Mammary epithelial cell (primary cell): ENCODE measurements at regions of chr19 and their contacts with region 1.

Region 1: DNA sequence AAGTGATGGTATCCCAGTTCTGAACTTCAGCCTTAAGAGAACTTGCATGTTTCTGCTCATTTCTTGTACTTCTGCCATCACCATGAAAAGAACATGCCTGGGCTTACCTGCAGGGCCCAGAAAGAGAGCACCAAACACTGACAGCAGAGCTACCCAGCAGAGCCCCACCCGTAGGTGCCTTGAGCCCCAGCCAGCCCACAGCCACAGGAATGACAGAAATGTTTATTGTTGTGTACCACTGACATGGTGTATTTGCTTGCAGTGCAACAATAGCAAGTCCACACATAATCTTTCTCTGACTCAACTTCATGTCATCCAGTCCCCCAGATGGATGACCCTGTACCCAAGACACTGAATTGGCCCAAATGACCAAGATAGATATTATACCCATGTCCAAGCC is 195.2 kb downstream of the TSHZ3 start:
- DNase-seq: peak; percentile 95
- H3K4me3 ChIP-seq: no peak overlapping the region
- H3K27ac ChIP-seq: peak overlapping the region; percentile 77
- H3K4me1 ChIP-seq: peaks cover 17% of the 10 kb centered on the region
- H3K27me3 ChIP-seq: no peaks in the 10 kb centered on the region
- CTCF ChIP-seq: peak in 1 of 2 donors; percentile 11

Region 2: GRCh38 chr19:31118287-31118955 is 35.6 kb before region 1 on chr19:
- CTCF ChIA-PET with region 1: no interaction called
- dilution Hi-C with region 1: no loop called
- in situ Hi-C with region 1: no loop called
- intact Hi-C with region 1: no loop called
- DNase-seq: no peak
- H3K4me3 ChIP-seq: no peak overlapping the region
- H3K27ac ChIP-seq: no peak overlapping the region
- H3K4me1 ChIP-seq: no peaks in the 10 kb centered on the region
- H3K27me3 ChIP-seq: no peaks in the 10 kb centered on the region
- CTCF ChIP-seq: no peak

Region 3: GRCh38 chr19:31139871-31140505 is 14.0 kb before region 1 on chr19:
- CTCF ChIA-PET with region 1: no interaction called
- dilution Hi-C with region 1: no loop called
- in situ Hi-C with region 1: no loop called
- intact Hi-C with region 1: loop called (anchors 2 kb)
- DNase-seq: peak; percentile 33
- H3K4me3 ChIP-seq: no peak overlapping the region
- H3K27ac ChIP-seq: no peak overlapping the region
- H3K4me1 ChIP-seq: peaks cover 11% of the 10 kb centered on the region
- H3K27me3 ChIP-seq: no peaks in the 10 kb centered on the region
- CTCF ChIP-seq: no peak

Region 4: GRCh38 chr19:31164791-31165201 is 10.8 kb after region 1 on chr19:
- CTCF ChIA-PET with region 1: no interaction called
- dilution Hi-C with region 1: no loop called
- in situ Hi-C with region 1: no loop called
- intact Hi-C with region 1: no loop called
- DNase-seq: no peak
- H3K4me3 ChIP-seq: no peak overlapping the region
- H3K27ac ChIP-seq: no peak overlapping the region
- H3K4me1 ChIP-seq: no peaks in the 10 kb centered on the region
- H3K27me3 ChIP-seq: no peaks in the 10 kb centered on the region
- CTCF ChIP-seq: no peak

Region 5: GRCh38 chr19:31177246-31177645 is 23.2 kb after region 1 on chr19:
- CTCF ChIA-PET with region 1: no interaction called
- dilution Hi-C with region 1: no loop called
- in situ Hi-C with region 1: no loop called
- intact Hi-C with region 1: no loop called
- DNase-seq: no peak
- H3K4me3 ChIP-seq: no peak overlapping the region
- H3K27ac ChIP-seq: no peak overlapping the region
- H3K4me1 ChIP-seq: no peaks in the 10 kb centered on the region
- H3K27me3 ChIP-seq: no peaks in the 10 kb centered on the region
- CTCF ChIP-seq: no peak

Region 6: GRCh38 chr19:31214086-31214485 is 60.1 kb after region 1 on chr19:
- CTCF ChIA-PET with region 1: no interaction called
- dilution Hi-C with region 1: no loop called
- in situ Hi-C with region 1: no loop called
- intact Hi-C with region 1: loop called (anchors 1 kb)
- DNase-seq: peak; percentile 99
- H3K4me3 ChIP-seq: no peak overlapping the region
- H3K27ac ChIP-seq: peak overlapping the region; percentile 77
- H3K4me1 ChIP-seq: peaks cover 20% of the 10 kb centered on the region
- H3K27me3 ChIP-seq: no peaks in the 10 kb centered on the region
- CTCF ChIP-seq: no peak

Region 7: GRCh38 chr19:31338069-31338776 is 184.2 kb after region 1 on chr19:
- CTCF ChIA-PET with region 1: no interaction called
- dilution Hi-C with region 1: no loop called
- in situ Hi-C with region 1: loop called in 1 of 2 experiments (anchors 25 kb)
- intact Hi-C with region 1: loop called (anchors 5 kb)
- DNase-seq: no peak
- H3K4me3 ChIP-seq: no peak overlapping the region
- H3K27ac ChIP-seq: no peak overlapping the region
- H3K4me1 ChIP-seq: peaks cover 45% of the 10 kb centered on the region
- H3K27me3 ChIP-seq: no peaks in the 10 kb centered on the region
- CTCF ChIP-seq: peak; percentile 40 to 48